Natural killer cell (primary cell): ENCODE measurements at regions of chr1 and their contacts with region 1.

Region 1: DNA sequence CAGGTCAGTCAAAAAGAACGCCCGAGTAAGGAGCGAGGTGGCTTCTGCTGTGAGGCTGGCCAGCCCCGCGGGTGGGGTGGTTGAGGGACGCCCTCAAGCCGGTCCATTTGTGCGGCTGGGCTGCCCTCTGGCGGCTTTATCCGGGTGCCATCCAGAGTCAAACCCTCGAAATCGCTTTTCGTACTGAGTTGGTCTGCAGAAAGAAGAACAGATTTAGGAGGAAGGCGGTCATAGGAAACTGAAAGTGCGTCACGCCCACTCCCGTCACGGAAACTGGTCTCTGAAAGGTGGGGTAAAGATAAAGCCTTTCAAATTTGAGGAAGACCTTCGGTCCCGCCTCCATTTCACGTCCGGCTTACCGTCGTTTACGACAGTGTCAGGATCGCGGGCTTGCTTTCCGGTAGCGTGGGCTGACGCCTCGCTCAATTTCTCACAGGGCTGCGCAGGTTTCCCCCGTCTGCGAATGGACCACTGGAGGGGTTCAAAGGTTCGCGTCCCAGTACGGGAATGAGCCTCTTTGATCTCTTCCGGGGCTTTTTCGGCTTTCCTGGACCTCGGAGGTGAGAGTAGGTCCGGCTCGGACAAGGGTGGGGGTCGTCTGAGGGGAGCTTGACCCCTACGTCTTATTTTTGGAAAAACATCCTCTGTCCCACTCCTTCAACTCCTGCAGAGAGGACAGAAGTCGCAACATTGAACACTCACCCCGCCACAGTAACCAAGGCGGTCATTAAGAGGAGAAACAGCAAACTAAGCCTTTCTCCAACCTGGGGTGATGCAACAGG is at the start of gene HAX1:
- DNase-seq: peak; percentile 93 to 99
- ATAC-seq: peak; percentile 89 to 96 (median 91)
- H3K4me3 ChIP-seq: peak within 1 kb of the TSS; percentile 87
- H3K4me3 Mint-ChIP-seq: peak within 1 kb of the TSS; percentile 98
- H3K27ac ChIP-seq: peak within 1 kb of the TSS; percentile 94
- H3K27ac Mint-ChIP-seq: peak within 1 kb of the TSS; percentile 99 to 100
- H3K4me1 ChIP-seq: peaks cover 18% of the 10 kb centered on the region
- H3K4me1 Mint-ChIP-seq: peaks cover 26% of the 10 kb centered on the region in 2 donors
- H3K27me3 ChIP-seq: no peaks in the 10 kb centered on the region
- H3K27me3 Mint-ChIP-seq: no peaks in the 10 kb centered on the region
- CTCF ChIP-seq: peak; percentile 73
- total RNA-seq, gene HAX1: 36.5 to 52.8 (median 40.0) TPM

Region 2: DNA sequence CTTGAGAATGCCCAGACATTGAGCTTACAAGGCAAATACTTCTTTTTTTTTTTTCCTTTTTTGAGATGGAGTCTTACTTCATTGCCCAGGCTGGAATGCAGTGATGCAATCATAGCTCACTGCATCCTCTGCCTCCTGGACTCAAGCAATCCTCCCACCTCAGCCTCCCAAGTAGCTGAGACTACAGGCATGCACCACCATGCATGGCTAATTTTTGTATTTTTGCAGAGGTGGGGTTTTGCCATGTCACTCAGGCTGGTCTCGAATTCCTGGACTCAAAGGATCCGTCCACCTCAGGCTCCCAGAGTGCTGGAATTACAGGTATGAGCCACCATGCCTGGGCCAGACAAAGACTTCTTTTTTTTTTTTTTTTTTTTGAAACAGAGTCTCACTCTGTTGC is 196.7 kb before region 1 on chr1:
- intact Hi-C with region 1: no loop called
- DNase-seq: no peak
- ATAC-seq: no peak
- H3K4me3 ChIP-seq: no peak overlapping the region
- H3K4me3 Mint-ChIP-seq: no peak overlapping the region
- H3K27ac ChIP-seq: no peak overlapping the region
- H3K27ac Mint-ChIP-seq: no peak overlapping the region
- H3K4me1 ChIP-seq: no peaks in the 10 kb centered on the region
- H3K4me1 Mint-ChIP-seq: no peaks in the 10 kb centered on the region
- H3K27me3 ChIP-seq: peaks cover 3% of the 10 kb centered on the region
- H3K27me3 Mint-ChIP-seq: peaks cover 9% of the 10 kb centered on the region in 2 donors
- CTCF ChIP-seq: no peak

Region 3: GRCh38 chr1:154183045-154183915 is 89.1 kb before region 1 on chr1:
- intact Hi-C with region 1: loop called (anchors 2 kb)
- DNase-seq: peak; percentile 91 to 96
- ATAC-seq: peak; percentile 89 to 92 (median 92)
- H3K4me3 ChIP-seq: peak overlapping the region; percentile 88
- H3K4me3 Mint-ChIP-seq: peak overlapping the region; percentile 100
- H3K27ac ChIP-seq: peak overlapping the region; percentile 92
- H3K27ac Mint-ChIP-seq: peak overlapping the region; percentile 92 to 97
- H3K4me1 ChIP-seq: peaks cover 45% of the 10 kb centered on the region
- H3K4me1 Mint-ChIP-seq: peaks cover 51 to 52% of the 10 kb centered on the region in 2 donors
- H3K27me3 ChIP-seq: no peaks in the 10 kb centered on the region
- H3K27me3 Mint-ChIP-seq: peaks cover 0 to 7% of the 10 kb centered on the region in 2 donors
- CTCF ChIP-seq: no peak

Region 4: GRCh38 chr1:154198756-154199562 is 73.4 kb before region 1 on chr1:
- intact Hi-C with region 1: loop called (anchors 1 kb)
- DNase-seq: peak in 1 of 2 donors; percentile 82
- ATAC-seq: peak; percentile 77 to 88 (median 78)
- H3K4me3 ChIP-seq: no peak overlapping the region
- H3K4me3 Mint-ChIP-seq: no peak overlapping the region
- H3K27ac ChIP-seq: no peak overlapping the region
- H3K27ac Mint-ChIP-seq: no peak overlapping the region
- H3K4me1 ChIP-seq: no peaks in the 10 kb centered on the region
- H3K4me1 Mint-ChIP-seq: no peaks in the 10 kb centered on the region
- H3K27me3 ChIP-seq: no peaks in the 10 kb centered on the region
- H3K27me3 Mint-ChIP-seq: peaks cover 3 to 5% of the 10 kb centered on the region in 2 donors
- CTCF ChIP-seq: peak; percentile 50

Region 5: GRCh38 chr1:154220071-154220969 is 52.1 kb before region 1 on chr1 and contains the start of gene UBAP2L:
- intact Hi-C with region 1: loop called (anchors 1 kb)
- DNase-seq: peak; percentile 98 to 100
- ATAC-seq: peak; percentile 85 to 94 (median 90)
- H3K4me3 ChIP-seq: peak within 1 kb of the TSS; percentile 96
- H3K4me3 Mint-ChIP-seq: peak within 1 kb of the TSS; percentile 96
- H3K27ac ChIP-seq: peak within 1 kb of the TSS; percentile 95
- H3K27ac Mint-ChIP-seq: peak within 1 kb of the TSS; percentile 97 to 98
- H3K4me1 ChIP-seq: peaks cover 21% of the 10 kb centered on the region
- H3K4me1 Mint-ChIP-seq: peaks cover 63 to 75% of the 10 kb centered on the region in 2 donors
- H3K27me3 ChIP-seq: no peaks in the 10 kb centered on the region
- H3K27me3 Mint-ChIP-seq: peaks cover 0 to 2% of the 10 kb centered on the region in 2 donors
- CTCF ChIP-seq: no peak
- total RNA-seq, gene UBAP2L: 195 to 220 (median 218) TPM

Region 6: GRCh38 chr1:154335025-154335714 is 62.8 kb after region 1 on chr1:
- intact Hi-C with region 1: loop called (anchors 1 kb)
- DNase-seq: peak; percentile 82 to 96
- ATAC-seq: peak; percentile 95 to 99 (median 99)
- H3K4me3 ChIP-seq: no peak overlapping the region
- H3K4me3 Mint-ChIP-seq: peak overlapping the region; percentile 78
- H3K27ac ChIP-seq: peak overlapping the region; percentile 41
- H3K27ac Mint-ChIP-seq: peak overlapping the region; percentile 88 to 92
- H3K4me1 ChIP-seq: peaks cover 63% of the 10 kb centered on the region
- H3K4me1 Mint-ChIP-seq: peaks cover 47 to 49% of the 10 kb centered on the region in 2 donors
- H3K27me3 ChIP-seq: no peaks in the 10 kb centered on the region
- H3K27me3 Mint-ChIP-seq: no peaks in the 10 kb centered on the region
- CTCF ChIP-seq: peak; percentile 97

Region 7: GRCh38 chr1:154342836-154343472 is 70.5 kb after region 1 on chr1:
- intact Hi-C with region 1: loop called (anchors 2 kb)
- DNase-seq: peak; percentile 65 to 84
- ATAC-seq: peak; percentile 92 to 98 (median 93)
- H3K4me3 ChIP-seq: peak overlapping the region; percentile 27
- H3K4me3 Mint-ChIP-seq: peak overlapping the region; percentile 90
- H3K27ac ChIP-seq: peak overlapping the region; percentile 83
- H3K27ac Mint-ChIP-seq: peak overlapping the region; percentile 94 to 97
- H3K4me1 ChIP-seq: peaks cover 83% of the 10 kb centered on the region
- H3K4me1 Mint-ChIP-seq: peaks cover 67 to 74% of the 10 kb centered on the region in 2 donors
- H3K27me3 ChIP-seq: no peaks in the 10 kb centered on the region
- H3K27me3 Mint-ChIP-seq: no peaks in the 10 kb centered on the region
- CTCF ChIP-seq: no peak